ENCODE measurements at regions of chr11 and their contacts with region 1.

Region 1: DNA sequence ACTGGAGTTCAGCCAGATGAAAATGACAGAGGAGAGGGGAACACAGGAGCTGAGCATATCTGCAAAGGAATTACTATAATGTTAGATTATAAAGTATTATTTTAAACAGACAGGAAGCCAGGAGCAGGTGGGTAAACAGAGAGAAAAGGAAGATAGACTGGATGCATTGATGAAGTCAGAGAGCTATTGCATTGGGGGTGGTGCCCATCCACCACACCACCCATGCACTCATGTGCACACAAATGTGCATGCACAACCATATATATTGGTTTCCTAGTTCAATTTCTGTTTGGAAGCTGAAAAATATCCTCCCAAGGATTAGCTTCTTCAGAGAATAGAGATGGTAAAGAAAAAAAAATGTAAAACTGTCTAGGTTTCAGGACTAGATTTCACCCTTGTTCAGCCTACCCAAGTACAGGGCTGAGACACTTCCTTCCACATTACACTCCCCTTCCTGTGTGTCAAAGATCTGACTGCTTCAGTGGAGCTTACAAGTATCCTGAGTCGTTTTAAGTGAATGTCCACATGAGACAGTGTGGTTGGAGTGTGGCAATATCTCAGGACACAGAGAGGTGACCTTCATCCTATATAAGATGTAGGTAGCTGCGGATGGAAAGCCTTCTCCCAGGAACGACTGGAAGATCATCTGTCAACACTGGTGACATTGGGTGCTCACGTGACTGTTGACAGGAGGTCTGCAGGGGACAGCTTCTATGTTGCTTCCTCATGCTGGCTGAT is 12.2 kb upstream of the SMPD1 start:
- DNase-seq: peak in 3 of 14 experiments; percentile 37 to 38 (median 37)
- ATAC-seq: peak; percentile 86
- H3K4me3 ChIP-seq: peak overlapping the region; percentile 8
- H3K4me3 Mint-ChIP-seq: peak overlapping the region; percentile 50
- H3K27ac ChIP-seq: peak overlapping the region; percentile 10 to 40
- H3K27ac Mint-ChIP-seq: peak overlapping the region; percentile 90
- H3K4me1 ChIP-seq: peaks cover 14% of the 10 kb centered on the region
- H3K4me1 Mint-ChIP-seq: peaks cover 33% of the 10 kb centered on the region
- H3K27me3 ChIP-seq: no peaks in the 10 kb centered on the region
- H3K27me3 Mint-ChIP-seq: no peaks in the 10 kb centered on the region
- CTCF ChIP-seq: no peak

Region 2: DNA sequence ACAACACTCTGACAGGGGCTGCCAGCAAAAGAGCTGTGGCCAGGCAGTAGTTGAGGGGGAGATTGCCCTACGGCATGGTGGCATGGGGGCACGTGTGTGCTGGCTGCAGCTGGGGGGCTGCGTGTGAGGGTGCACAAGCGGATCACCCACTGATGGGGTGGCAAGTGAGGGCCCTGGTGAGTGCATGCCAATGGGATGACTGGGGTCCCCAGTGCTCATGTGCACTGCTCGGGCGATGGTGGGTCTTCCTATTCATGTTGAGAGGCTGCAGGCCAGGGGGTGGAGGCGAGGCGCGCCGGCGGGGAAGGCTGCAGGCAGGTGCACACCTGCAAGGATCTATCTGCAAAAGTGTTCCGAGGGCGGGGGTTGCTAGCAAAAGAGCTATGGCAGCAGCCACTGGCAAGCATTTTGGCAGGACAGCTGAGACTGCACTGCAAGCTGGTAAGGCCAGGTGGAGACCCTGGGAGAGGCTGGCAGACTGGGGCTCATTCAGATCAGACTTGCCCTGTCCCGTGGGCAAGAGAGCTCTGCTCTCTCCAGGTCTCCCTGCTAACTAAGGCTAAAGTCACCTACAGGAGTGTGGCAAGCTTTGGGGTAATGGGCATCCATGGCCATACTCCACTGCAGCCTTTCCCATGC is 917.0 kb before region 1 on chr11:
- CTCF ChIA-PET with region 1: no interaction called
- POLR2A ChIA-PET with region 1: no interaction called
- intact Hi-C with region 1: no loop called
- DNase-seq: no peak
- ATAC-seq: no peak
- H3K4me3 ChIP-seq: no peak overlapping the region
- H3K4me3 Mint-ChIP-seq: no peak overlapping the region
- H3K27ac ChIP-seq: no peak overlapping the region
- H3K27ac Mint-ChIP-seq: no peak overlapping the region
- H3K4me1 ChIP-seq: no peaks in the 10 kb centered on the region
- H3K4me1 Mint-ChIP-seq: no peaks in the 10 kb centered on the region
- H3K27me3 ChIP-seq: no peaks in the 10 kb centered on the region
- H3K27me3 Mint-ChIP-seq: peaks cover 9% of the 10 kb centered on the region
- CTCF ChIP-seq: no peak

Region 3: GRCh38 chr11:6389921-6390724 is 12.1 kb after region 1 on chr11 and contains the start of gene SMPD1:
- CTCF ChIA-PET with region 1: interaction called, 19 read pairs
- POLR2A ChIA-PET with region 1: interaction called, 52 read pairs
- intact Hi-C with region 1: no loop called
- DNase-seq: peak; percentile 85 to 98 (median 94)
- ATAC-seq: peak; percentile 82
- H3K4me3 ChIP-seq: peak within 1 kb of the TSS; percentile 95
- H3K4me3 Mint-ChIP-seq: peak within 1 kb of the TSS; percentile 90
- H3K27ac ChIP-seq: peak within 1 kb of the TSS; percentile 87 to 93
- H3K27ac Mint-ChIP-seq: peak within 1 kb of the TSS; percentile 93
- H3K4me1 ChIP-seq: peaks cover 54% of the 10 kb centered on the region
- H3K4me1 Mint-ChIP-seq: peaks cover 75% of the 10 kb centered on the region
- H3K27me3 ChIP-seq: no peaks in the 10 kb centered on the region
- H3K27me3 Mint-ChIP-seq: no peaks in the 10 kb centered on the region
- CTCF ChIP-seq: no peak
- total RNA-seq, gene SMPD1: 70.9 to 75.0 TPM

Region 4: DNA sequence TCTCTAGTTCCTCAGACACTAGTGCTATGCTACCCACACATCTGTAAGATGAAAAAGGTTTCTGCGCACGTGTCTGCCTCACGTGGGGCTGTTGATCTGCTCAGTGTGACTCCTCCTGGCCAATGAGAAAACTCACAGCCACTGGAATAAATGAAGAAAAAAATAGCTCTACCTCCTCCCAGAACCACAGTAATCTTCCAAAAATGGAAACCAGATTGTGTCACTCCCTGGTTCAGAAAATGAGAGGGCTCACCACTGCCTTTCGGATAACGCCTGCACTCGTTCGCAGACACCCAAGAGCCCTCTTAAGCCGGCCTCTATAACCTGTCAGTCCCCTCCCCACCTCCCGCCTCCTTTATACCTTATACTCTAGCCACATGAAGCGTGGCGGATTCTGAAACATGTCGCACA is 35.7 kb after region 1 on chr11:
- CTCF ChIA-PET with region 1: interaction called, 15 read pairs
- POLR2A ChIA-PET with region 1: interaction called, 63 read pairs
- intact Hi-C with region 1: loop called (anchors 5 kb)
- DNase-seq: peak in 13 of 14 experiments; percentile 48 to 90 (median 72)
- ATAC-seq: peak; percentile 91
- H3K4me3 ChIP-seq: peak overlapping the region; percentile 20
- H3K4me3 Mint-ChIP-seq: no peak overlapping the region
- H3K27ac ChIP-seq: peak overlapping the region; percentile 66 to 82
- H3K27ac Mint-ChIP-seq: no peak overlapping the region
- H3K4me1 ChIP-seq: peaks cover 88% of the 10 kb centered on the region
- H3K4me1 Mint-ChIP-seq: peaks cover 19% of the 10 kb centered on the region
- H3K27me3 ChIP-seq: no peaks in the 10 kb centered on the region
- H3K27me3 Mint-ChIP-seq: no peaks in the 10 kb centered on the region
- CTCF ChIP-seq: no peak

Region 5: GRCh38 chr11:6431861-6432260 is 53.8 kb after region 1 on chr11:
- CTCF ChIA-PET with region 1: interaction called, 16 read pairs
- POLR2A ChIA-PET with region 1: interaction called, 4 read pairs
- intact Hi-C with region 1: no loop called
- DNase-seq: no peak
- ATAC-seq: no peak
- H3K4me3 ChIP-seq: no peak overlapping the region
- H3K4me3 Mint-ChIP-seq: no peak overlapping the region
- H3K27ac ChIP-seq: no peak overlapping the region
- H3K27ac Mint-ChIP-seq: no peak overlapping the region
- H3K4me1 ChIP-seq: no peaks in the 10 kb centered on the region
- H3K4me1 Mint-ChIP-seq: no peaks in the 10 kb centered on the region
- H3K27me3 ChIP-seq: no peaks in the 10 kb centered on the region
- H3K27me3 Mint-ChIP-seq: no peaks in the 10 kb centered on the region
- CTCF ChIP-seq: no peak

Region 6: GRCh38 chr11:6473481-6474422 is 95.7 kb after region 1 on chr11 and contains the start of gene TRIM3:
- CTCF ChIA-PET with region 1: interaction called, 5 read pairs
- POLR2A ChIA-PET with region 1: interaction called, 14 read pairs
- intact Hi-C with region 1: no loop called
- DNase-seq: peak; percentile 36 to 93 (median 69)
- ATAC-seq: peak; percentile 66
- H3K4me3 ChIP-seq: peak within 1 kb of the TSS; percentile 82
- H3K4me3 Mint-ChIP-seq: peak within 1 kb of the TSS; percentile 87
- H3K27ac ChIP-seq: peak within 1 kb of the TSS; percentile 38 to 76
- H3K27ac Mint-ChIP-seq: peak within 1 kb of the TSS; percentile 66
- H3K4me1 ChIP-seq: peaks cover 29% of the 10 kb centered on the region
- H3K4me1 Mint-ChIP-seq: peaks cover 34% of the 10 kb centered on the region
- H3K27me3 ChIP-seq: no peaks in the 10 kb centered on the region
- H3K27me3 Mint-ChIP-seq: no peaks in the 10 kb centered on the region
- CTCF ChIP-seq: no peak
- total RNA-seq, gene TRIM3: 16.4 to 16.6 TPM

Region 7: GRCh38 chr11:6505577-6506240 is 127.6 kb after region 1 on chr11:
- CTCF ChIA-PET with region 1: interaction called, 27 read pairs
- POLR2A ChIA-PET with region 1: interaction called, 6 read pairs
- intact Hi-C with region 1: loop called (anchors 1 kb)
- DNase-seq: peak in 4 of 14 experiments; percentile 29 to 66 (median 57)
- ATAC-seq: peak; percentile 59
- H3K4me3 ChIP-seq: no peak overlapping the region
- H3K4me3 Mint-ChIP-seq: no peak overlapping the region
- H3K27ac ChIP-seq: no peak overlapping the region
- H3K27ac Mint-ChIP-seq: no peak overlapping the region
- H3K4me1 ChIP-seq: no peaks in the 10 kb centered on the region
- H3K4me1 Mint-ChIP-seq: peaks cover 5% of the 10 kb centered on the region
- H3K27me3 ChIP-seq: no peaks in the 10 kb centered on the region
- H3K27me3 Mint-ChIP-seq: no peaks in the 10 kb centered on the region
- CTCF ChIP-seq: peak; percentile 77

Region 8: DNA sequence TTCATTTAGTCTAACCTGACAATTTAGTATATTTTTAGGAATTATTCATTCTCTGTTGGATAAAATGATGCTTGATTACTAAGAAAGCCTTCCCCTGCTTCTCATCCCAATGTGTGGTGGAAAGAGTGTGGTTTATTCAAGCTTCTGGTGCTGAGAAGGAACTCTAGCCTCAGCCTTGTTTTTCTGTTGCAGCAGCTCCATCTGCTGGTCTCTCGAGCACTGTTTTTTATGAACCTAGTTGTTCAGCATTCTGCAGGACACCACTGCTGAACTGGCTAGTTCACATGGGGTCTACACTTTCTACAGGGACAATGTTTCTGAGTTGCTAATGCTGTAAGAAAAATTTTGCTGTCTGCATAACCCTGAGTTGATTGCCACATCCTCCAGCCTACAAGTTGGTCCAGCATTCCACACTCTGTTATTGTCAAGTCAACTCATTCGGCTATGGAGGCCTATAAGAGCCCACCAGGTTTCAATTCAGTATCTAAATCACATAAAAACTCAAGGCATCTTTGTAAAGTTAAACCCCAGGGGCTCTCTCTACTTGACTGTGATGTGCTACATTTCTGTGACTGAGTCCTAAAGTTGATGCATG is 379.4 kb after region 1 on chr11:
- CTCF ChIA-PET with region 1: no interaction called
- POLR2A ChIA-PET with region 1: no interaction called
- intact Hi-C with region 1: loop called (anchors 2 to 5 kb)
- DNase-seq: peak; percentile 37 to 82 (median 56)
- ATAC-seq: peak; percentile 83
- H3K4me3 ChIP-seq: no peak overlapping the region
- H3K4me3 Mint-ChIP-seq: no peak overlapping the region
- H3K27ac ChIP-seq: no peak overlapping the region
- H3K27ac Mint-ChIP-seq: no peak overlapping the region
- H3K4me1 ChIP-seq: no peaks in the 10 kb centered on the region
- H3K4me1 Mint-ChIP-seq: peaks cover 14% of the 10 kb centered on the region
- H3K27me3 ChIP-seq: no peaks in the 10 kb centered on the region
- H3K27me3 Mint-ChIP-seq: peaks cover 11% of the 10 kb centered on the region
- CTCF ChIP-seq: peak; percentile 86

Measured in CD4-positive, alpha-beta T cell (primary cell).